CD8-positive, alpha-beta T cell (primary cell): ENCODE measurements at regions of chr6 and their contacts with region 1.

Region 1: GRCh38 chr6:26270903-26271667 is 93.9 kb upstream of the BTN3A2 start:
- DNase-seq: peak; percentile 68 to 91 (median 80)
- ATAC-seq: peak; percentile 22
- H3K4me3 ChIP-seq: peak overlapping the region; percentile 65 to 67
- H3K4me3 Mint-ChIP-seq: no peak overlapping the region
- H3K27ac ChIP-seq: peak overlapping the region; percentile 73 to 92
- H3K27ac Mint-ChIP-seq: peak overlapping the region; percentile 73
- H3K4me1 ChIP-seq: peaks cover 22% of the 10 kb centered on the region
- H3K4me1 Mint-ChIP-seq: peaks cover 13% of the 10 kb centered on the region
- H3K27me3 ChIP-seq: no peaks in the 10 kb centered on the region
- H3K27me3 Mint-ChIP-seq: no peaks in the 10 kb centered on the region
- CTCF ChIP-seq: no peak

Region 2: DNA sequence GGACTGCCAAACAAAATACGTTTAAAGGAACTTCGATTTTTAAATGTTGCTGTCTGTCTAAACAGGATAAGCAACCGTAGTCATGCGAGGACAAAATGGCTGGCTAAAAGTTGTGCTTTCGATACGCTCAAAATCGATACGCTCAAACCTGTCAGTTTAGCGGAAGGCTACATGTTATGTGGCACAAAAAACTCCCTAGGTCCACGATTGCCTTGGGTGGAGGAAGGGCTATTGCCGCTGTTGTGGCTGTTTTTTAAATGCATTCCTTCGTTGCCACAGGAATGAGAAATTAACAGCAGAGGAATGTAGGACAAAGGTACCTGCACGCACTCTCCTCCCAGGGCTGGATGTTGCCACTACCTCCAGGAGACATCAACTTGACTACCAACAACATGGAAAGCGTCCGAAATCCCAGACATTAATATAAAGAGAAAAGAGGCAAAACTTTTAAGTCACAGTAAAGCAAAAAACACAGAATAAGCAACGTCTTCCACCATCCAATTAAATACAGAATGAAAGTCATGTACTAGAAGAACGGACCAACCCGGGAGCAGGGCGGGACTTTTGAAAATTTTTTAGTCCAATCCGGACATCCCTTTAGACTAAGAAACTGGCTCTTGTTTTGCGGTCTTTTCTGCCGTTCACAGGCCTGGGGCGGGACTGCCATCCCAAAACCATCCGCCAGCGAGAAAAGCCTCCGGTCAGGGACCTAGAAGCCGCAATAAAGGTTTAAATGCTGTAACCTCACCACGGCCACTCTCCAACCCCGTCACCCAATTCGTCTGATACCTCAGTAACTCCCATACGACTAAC is 216.0 kb before region 1 on chr6:
- CTCF ChIA-PET with region 1: no interaction called
- POLR2A ChIA-PET with region 1: interaction called, 10 read pairs
- intact Hi-C with region 1: loop called in 1 of 2 experiments (anchors 5 kb)
- DNase-seq: peak; percentile 71 to 94 (median 88)
- ATAC-seq: peak; percentile 72
- H3K4me3 ChIP-seq: peak overlapping the region; percentile 75 to 85
- H3K4me3 Mint-ChIP-seq: peak overlapping the region; percentile 96
- H3K27ac ChIP-seq: peak overlapping the region; percentile 85 to 96
- H3K27ac Mint-ChIP-seq: peak overlapping the region; percentile 99
- H3K4me1 ChIP-seq: peaks cover 17% of the 10 kb centered on the region
- H3K4me1 Mint-ChIP-seq: peaks cover 23% of the 10 kb centered on the region
- H3K27me3 ChIP-seq: no peaks in the 10 kb centered on the region
- H3K27me3 Mint-ChIP-seq: no peaks in the 10 kb centered on the region
- CTCF ChIP-seq: no peak

Region 3: DNA sequence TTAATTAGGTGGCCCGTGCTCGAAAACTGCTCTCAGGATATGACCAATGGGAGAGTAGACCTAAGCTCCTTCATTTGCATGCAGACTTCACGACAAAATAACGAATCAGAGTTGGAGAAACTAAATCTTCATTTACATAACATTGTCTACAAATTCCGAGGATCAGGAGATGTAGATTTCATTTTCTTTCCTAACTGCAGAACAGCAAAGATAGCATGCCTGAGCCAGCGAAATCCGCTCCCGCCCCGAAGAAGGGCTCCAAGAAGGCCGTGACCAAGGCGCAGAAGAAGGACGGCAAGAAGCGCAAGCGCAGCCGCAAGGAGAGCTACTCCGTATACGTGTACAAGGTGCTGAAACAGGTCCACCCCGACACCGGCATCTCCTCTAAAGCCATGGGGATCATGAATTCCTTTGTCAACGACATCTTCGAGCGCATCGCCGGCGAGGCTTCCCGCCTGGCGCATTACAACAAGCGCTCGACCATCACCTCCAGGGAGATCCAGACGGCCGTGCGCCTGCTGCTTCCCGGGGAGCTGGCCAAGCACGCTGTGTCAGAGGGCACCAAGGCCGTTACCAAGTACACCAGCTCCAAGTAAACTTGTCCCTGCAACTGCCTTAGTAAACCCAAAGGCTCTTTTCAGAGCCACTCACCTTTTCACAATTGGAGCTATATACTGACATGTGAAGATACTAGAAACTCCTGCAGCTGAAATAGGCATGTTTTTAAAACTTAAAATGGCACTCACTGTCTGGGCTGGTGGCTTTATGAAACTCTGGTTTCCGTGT is 87.3 kb before region 1 on chr6:
- CTCF ChIA-PET with region 1: interaction called, 4 read pairs
- POLR2A ChIA-PET with region 1: interaction called, 35 read pairs
- intact Hi-C with region 1: no loop called
- DNase-seq: peak in 7 of 9 experiments; percentile 33 to 90 (median 59)
- ATAC-seq: peak; percentile 88
- H3K4me3 ChIP-seq: peak overlapping the region; percentile 60 to 71
- H3K4me3 Mint-ChIP-seq: peak overlapping the region; percentile 100
- H3K27ac ChIP-seq: peak overlapping the region; percentile 61 to 76
- H3K27ac Mint-ChIP-seq: peak overlapping the region; percentile 99
- H3K4me1 ChIP-seq: peaks cover 20% of the 10 kb centered on the region
- H3K4me1 Mint-ChIP-seq: peaks cover 42% of the 10 kb centered on the region
- H3K27me3 ChIP-seq: no peaks in the 10 kb centered on the region
- H3K27me3 Mint-ChIP-seq: no peaks in the 10 kb centered on the region
- CTCF ChIP-seq: no peak

Region 4: GRCh38 chr6:26234421-26235296 is 36.4 kb before region 1 on chr6:
- CTCF ChIA-PET with region 1: interaction called, 24 read pairs
- POLR2A ChIA-PET with region 1: interaction called, 187 read pairs
- intact Hi-C with region 1: loop called in 1 of 2 experiments (anchors 2 kb)
- DNase-seq: peak; percentile 55 to 88 (median 66)
- ATAC-seq: peak; percentile 63
- H3K4me3 ChIP-seq: peak overlapping the region; percentile 66 to 76
- H3K4me3 Mint-ChIP-seq: peak overlapping the region; percentile 85
- H3K27ac ChIP-seq: peak overlapping the region; percentile 84 to 92
- H3K27ac Mint-ChIP-seq: peak overlapping the region; percentile 93
- H3K4me1 ChIP-seq: peaks cover 14% of the 10 kb centered on the region
- H3K4me1 Mint-ChIP-seq: peaks cover 31% of the 10 kb centered on the region
- H3K27me3 ChIP-seq: no peaks in the 10 kb centered on the region
- H3K27me3 Mint-ChIP-seq: no peaks in the 10 kb centered on the region
- CTCF ChIP-seq: no peak

Region 5: GRCh38 chr6:26285143-26286134 is 14.4 kb after region 1 on chr6:
- CTCF ChIA-PET with region 1: interaction called, 12 read pairs
- POLR2A ChIA-PET with region 1: interaction called, 197 read pairs
- intact Hi-C with region 1: loop called (anchors 1 kb)
- DNase-seq: peak; percentile 83 to 99 (median 96)
- ATAC-seq: peak; percentile 82
- H3K4me3 ChIP-seq: peak overlapping the region; percentile 73 to 76
- H3K4me3 Mint-ChIP-seq: peak overlapping the region; percentile 91
- H3K27ac ChIP-seq: peak overlapping the region; percentile 89 to 96
- H3K27ac Mint-ChIP-seq: peak overlapping the region; percentile 97
- H3K4me1 ChIP-seq: peaks cover 14% of the 10 kb centered on the region
- H3K4me1 Mint-ChIP-seq: peaks cover 31% of the 10 kb centered on the region
- H3K27me3 ChIP-seq: no peaks in the 10 kb centered on the region
- H3K27me3 Mint-ChIP-seq: no peaks in the 10 kb centered on the region
- CTCF ChIP-seq: no peak

Region 6: DNA sequence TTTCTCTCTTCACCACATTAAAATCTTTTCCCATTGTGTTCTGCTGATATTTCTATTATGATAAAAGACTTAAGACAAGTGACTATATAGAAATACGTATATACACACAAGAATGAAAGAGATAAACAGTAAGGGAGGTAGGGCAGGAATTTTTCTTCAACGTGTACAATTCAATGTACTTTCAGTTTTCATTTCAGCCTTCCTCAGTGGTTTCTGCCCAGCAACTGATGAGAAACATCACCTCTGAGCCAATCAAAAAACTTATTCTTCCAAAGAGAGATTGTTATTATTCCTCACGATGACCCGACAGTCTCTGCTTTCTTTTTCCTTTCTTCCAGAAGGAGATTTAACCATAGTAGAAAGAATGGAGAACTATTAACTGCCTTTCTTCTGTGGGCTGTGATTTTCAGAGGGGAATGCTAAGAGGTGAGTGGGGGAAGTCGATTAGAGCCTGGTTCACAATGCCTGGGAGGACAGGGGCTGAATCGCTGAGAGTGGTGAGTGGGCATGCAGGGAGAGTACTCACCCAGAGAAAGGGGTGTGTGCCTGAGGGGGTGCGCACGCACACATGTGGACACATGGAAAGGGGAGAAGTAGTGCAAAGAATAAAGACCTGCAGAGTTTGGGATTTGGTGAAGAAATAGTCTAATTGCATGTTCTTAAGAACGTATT is 131.0 kb after region 1 on chr6 and contains the start of gene BTN3A1:
- CTCF ChIA-PET with region 1: no interaction called
- POLR2A ChIA-PET with region 1: no interaction called
- intact Hi-C with region 1: loop called in 1 of 2 experiments (anchors 5 kb)
- DNase-seq: peak; percentile 22 to 90 (median 65)
- ATAC-seq: peak; percentile 88
- H3K4me3 ChIP-seq: peak within 1 kb of the TSS; percentile 82 to 91
- H3K4me3 Mint-ChIP-seq: peak within 1 kb of the TSS; percentile 92
- H3K27ac ChIP-seq: peak within 1 kb of the TSS; percentile 92 to 97
- H3K27ac Mint-ChIP-seq: peak within 1 kb of the TSS; percentile 99
- H3K4me1 ChIP-seq: peaks cover 42% of the 10 kb centered on the region
- H3K4me1 Mint-ChIP-seq: peaks cover 50% of the 10 kb centered on the region
- H3K27me3 ChIP-seq: no peaks in the 10 kb centered on the region
- H3K27me3 Mint-ChIP-seq: no peaks in the 10 kb centered on the region
- CTCF ChIP-seq: no peak
- total RNA-seq, gene BTN3A1: 97.0 to 104 TPM